ENCODE measurements at regions of chr16 and their contacts with region 1.

Region 1: GRCh38 chr16:4152266-4152665 is 36.0 kb upstream of the ADCY9 start:
- DNase-seq: no peak
- H3K4me3 ChIP-seq: no peak overlapping the region
- H3K27ac ChIP-seq: no peak overlapping the region
- H3K4me1 ChIP-seq: no peaks in the 10 kb centered on the region
- CTCF ChIP-seq: no peak

Region 2: DNA sequence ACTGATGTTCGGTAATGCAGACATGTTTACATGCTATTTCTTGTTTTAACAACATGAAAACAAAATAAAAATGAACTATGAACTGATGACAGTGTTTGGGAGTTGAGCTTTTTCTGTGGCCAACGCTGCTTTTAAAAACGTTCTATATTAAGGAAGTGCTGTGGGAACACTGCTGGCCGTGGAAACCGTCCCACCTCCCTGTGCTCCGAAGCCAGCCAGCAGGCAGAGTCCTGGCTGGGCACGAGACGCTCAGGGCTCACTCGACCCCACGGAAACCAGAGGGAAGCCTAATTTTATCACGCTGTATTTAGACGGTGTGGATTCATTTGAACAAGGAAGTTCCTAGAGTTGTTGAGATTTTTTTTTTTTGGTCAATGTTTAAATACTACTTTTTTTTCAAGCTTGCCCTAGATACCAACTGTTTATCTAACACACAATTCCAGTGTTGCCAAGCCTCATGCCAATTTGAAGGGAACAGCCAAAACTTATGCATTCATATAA is 61.9 kb before region 1 on chr16:
- CTCF ChIA-PET with region 1: no interaction called
- POLR2A ChIA-PET with region 1: no interaction called
- intact Hi-C with region 1: loop called (anchors 10 kb)
- DNase-seq: no peak
- H3K4me3 ChIP-seq: no peak overlapping the region
- H3K27ac ChIP-seq: no peak overlapping the region
- H3K4me1 ChIP-seq: no peaks in the 10 kb centered on the region
- CTCF ChIP-seq: no peak

Measured in OCI-LY7 (cell line).